Heart left ventricle (tissue), 16 donors: ENCODE measurements at regions of chr2 and their contacts with region 1.

Region 1: DNA sequence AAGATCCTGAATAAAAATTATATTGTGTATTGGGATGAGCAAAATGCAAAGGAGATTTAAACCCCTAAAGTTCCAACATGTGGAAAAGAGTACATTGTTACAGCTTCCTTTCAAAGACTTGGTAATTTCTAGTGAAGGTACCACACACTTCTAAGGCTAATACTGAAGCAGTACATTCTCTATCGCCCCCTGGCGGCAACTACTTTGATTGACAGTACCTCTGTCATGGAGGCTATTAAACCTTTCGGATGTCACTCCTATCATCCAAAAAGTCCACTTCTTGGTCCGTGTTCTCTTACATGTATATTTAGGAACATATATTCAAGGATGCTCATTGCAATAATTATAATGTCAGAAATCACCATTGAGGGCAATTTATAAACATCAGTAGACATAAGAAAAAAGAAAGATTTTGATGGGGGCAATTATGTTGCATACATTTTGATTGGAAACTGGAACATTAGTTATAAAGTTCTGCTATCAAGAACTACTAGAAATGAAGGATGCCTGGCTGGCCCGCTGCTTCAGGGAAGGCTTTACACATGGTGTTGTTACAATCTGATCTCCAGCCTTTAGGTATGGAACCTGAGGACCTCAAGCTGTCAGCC is 601.6 kb downstream of the CPS1 start:
- DNase-seq: peak; percentile 43 to 69 (median 64)
- ATAC-seq: peak in 2 of 4 donors; percentile 60 to 65
- H3K4me3 ChIP-seq: no peak overlapping the region
- H3K27ac ChIP-seq: no peak overlapping the region
- H3K4me1 ChIP-seq: no peaks in the 10 kb centered on the region
- H3K27me3 ChIP-seq: peaks cover 0 to 4% (median 0%) of the 10 kb centered on the region in 9 donors
- CTCF ChIP-seq: peak; percentile 69 to 90 (median 81)
- POLR2A ChIP-seq: no peak

Region 2: DNA sequence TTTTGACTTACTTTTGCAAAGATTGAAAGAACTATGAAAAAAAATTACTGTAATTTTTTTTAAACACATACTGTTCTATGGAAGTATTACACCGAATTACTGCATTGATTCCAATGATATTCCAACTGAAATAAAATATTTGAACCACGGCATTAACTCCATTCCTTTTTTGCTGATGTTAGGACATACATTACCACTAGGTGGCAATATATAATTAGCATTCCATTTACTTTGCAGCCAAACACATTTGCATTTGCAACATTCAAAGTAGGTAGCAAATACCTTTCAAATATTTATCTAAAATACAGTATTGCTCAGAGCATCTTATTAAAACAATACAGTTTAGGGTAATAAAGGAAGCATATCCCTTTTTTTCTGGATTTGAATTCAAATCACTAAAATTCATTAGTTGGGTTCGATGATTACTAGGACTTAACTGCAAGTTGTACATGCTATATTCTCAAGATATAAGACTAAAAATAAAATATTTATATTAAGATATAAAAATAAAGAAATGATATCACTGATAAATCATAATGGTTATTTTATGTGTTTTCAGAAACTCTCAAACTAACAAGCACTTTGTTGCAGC is 712.7 kb before region 1 on chr2:
- intact Hi-C with region 1: loop called in 1 of 10 experiments (anchors 10 kb)
- DNase-seq: no peak
- ATAC-seq: no peak
- H3K4me3 ChIP-seq: no peak overlapping the region
- H3K27ac ChIP-seq: no peak overlapping the region
- H3K4me1 ChIP-seq: peaks cover 0 to 3% (median 0%) of the 10 kb centered on the region in 12 donors
- H3K27me3 ChIP-seq: no peaks in the 10 kb centered on the region
- CTCF ChIP-seq: peak; percentile 52 to 79 (median 69)
- POLR2A ChIP-seq: no peak

Region 3: GRCh38 chr2:210617732-210618330 is 540.1 kb before region 1 on chr2:
- intact Hi-C with region 1: loop called in 5 of 10 experiments (anchors 5 to 10 kb)
- DNase-seq: no peak
- ATAC-seq: no peak
- H3K4me3 ChIP-seq: no peak overlapping the region
- H3K27ac ChIP-seq: no peak overlapping the region
- H3K4me1 ChIP-seq: no peaks in the 10 kb centered on the region
- H3K27me3 ChIP-seq: no peaks in the 10 kb centered on the region
- CTCF ChIP-seq: peak; percentile 14 to 62 (median 44)
- POLR2A ChIP-seq: no peak

Region 4: DNA sequence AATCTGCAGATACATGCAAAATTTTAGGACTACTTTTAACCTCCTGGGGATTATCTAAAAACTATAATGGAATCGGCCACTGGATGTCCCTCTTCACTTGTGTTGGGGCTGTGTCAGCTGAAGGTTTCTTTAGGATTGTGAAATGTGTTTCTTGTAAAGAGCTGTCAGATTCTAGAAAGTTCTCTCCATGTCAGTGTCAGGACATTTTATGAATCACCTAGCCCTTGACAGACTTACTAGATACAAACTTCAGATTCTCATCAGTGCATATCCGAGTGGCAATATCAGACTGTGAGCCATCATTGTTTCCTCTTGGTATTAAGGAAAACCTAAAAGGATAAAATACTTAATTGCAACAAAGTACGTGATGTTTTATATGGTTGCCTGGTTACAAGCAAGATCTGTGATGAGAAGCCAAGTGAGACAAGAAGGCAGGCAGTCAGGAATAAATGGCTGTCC is 494.3 kb before region 1 on chr2:
- intact Hi-C with region 1: loop called in 1 of 10 experiments (anchors 5 kb)
- DNase-seq: no peak
- ATAC-seq: peak in 2 of 4 donors; percentile 45 to 47
- H3K4me3 ChIP-seq: no peak overlapping the region
- H3K27ac ChIP-seq: no peak overlapping the region
- H3K4me1 ChIP-seq: no peaks in the 10 kb centered on the region
- H3K27me3 ChIP-seq: no peaks in the 10 kb centered on the region
- CTCF ChIP-seq: peak in 9 of 12 donors; percentile 17 to 52 (median 41)
- POLR2A ChIP-seq: no peak

Region 5: GRCh38 chr2:210762604-210763588 is 395.1 kb before region 1 on chr2:
- intact Hi-C with region 1: no loop called
- DNase-seq: no peak
- ATAC-seq: no peak
- H3K4me3 ChIP-seq: no peak overlapping the region
- H3K27ac ChIP-seq: no peak overlapping the region
- H3K4me1 ChIP-seq: no peaks in the 10 kb centered on the region
- H3K27me3 ChIP-seq: no peaks in the 10 kb centered on the region
- CTCF ChIP-seq: no peak
- POLR2A ChIP-seq: no peak

Region 6: GRCh38 chr2:211035548-211036185 is 122.3 kb before region 1 on chr2:
- intact Hi-C with region 1: no loop called
- DNase-seq: no peak
- ATAC-seq: no peak
- H3K4me3 ChIP-seq: no peak overlapping the region
- H3K27ac ChIP-seq: no peak overlapping the region
- H3K4me1 ChIP-seq: no peaks in the 10 kb centered on the region
- H3K27me3 ChIP-seq: no peaks in the 10 kb centered on the region
- CTCF ChIP-seq: peak; percentile 26 to 67 (median 38)
- POLR2A ChIP-seq: no peak

Region 7: DNA sequence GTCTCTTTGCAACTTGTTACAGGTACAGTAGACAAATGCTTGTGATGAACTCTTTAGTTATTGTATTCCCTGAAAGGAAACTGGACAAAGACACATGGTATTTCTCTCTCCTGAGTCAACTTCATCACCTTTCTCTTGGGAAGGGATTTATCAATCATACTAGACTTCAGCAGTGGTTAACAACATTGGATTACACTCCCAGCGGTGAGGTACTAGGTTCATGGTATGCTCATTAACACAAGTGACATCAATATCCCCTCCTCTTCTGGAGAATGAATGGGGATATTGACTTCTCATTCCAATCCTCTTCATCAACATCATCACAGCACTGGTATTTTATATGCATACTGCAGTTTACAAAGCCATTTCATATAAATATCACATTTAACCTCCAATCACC is 806.0 kb after region 1 on chr2:
- intact Hi-C with region 1: no loop called
- DNase-seq: no peak
- ATAC-seq: no peak
- H3K4me3 ChIP-seq: no peak overlapping the region
- H3K27ac ChIP-seq: no peak overlapping the region
- H3K4me1 ChIP-seq: no peaks in the 10 kb centered on the region
- H3K27me3 ChIP-seq: no peaks in the 10 kb centered on the region
- CTCF ChIP-seq: no peak
- POLR2A ChIP-seq: no peak